Naive thymus-derived CD4-positive, alpha-beta T cell (primary cell): ENCODE measurements at regions of chr15 and their contacts with region 1.

Region 1: DNA sequence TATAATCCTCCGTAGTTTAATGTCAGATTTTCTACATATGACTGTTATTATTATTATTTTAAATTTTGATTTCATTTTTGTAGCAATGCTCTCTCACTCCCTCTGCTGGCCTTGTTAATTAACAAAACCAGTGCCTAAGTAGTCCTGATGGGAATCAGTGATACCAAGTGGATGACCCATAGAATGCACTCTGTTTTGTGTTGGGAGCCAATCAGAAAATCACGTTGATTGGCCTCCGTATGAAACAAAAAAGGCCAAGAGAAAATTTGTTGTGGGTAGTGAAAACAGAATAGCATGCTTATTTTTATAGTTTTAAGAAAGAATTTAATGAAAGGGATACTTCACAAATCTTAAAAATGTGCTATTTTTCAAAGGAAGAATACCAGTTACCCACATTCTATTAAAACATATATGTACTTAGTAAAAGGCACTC is 34.4 kb upstream of the MEIS2 start:
- DNase-seq: no peak
- ATAC-seq: no peak
- H3K4me3 ChIP-seq: no peak overlapping the region
- H3K4me3 Mint-ChIP-seq: no peak overlapping the region
- H3K27ac ChIP-seq: no peak overlapping the region
- H3K27ac Mint-ChIP-seq: no peak overlapping the region
- H3K4me1 ChIP-seq: no peaks in the 10 kb centered on the region
- H3K4me1 Mint-ChIP-seq: peaks cover 0 to 2% (median 0%) of the 10 kb centered on the region in 7 donors
- H3K27me3 ChIP-seq: no peaks in the 10 kb centered on the region
- H3K27me3 Mint-ChIP-seq: peaks cover 5 to 38% (median 26%) of the 10 kb centered on the region in 5 donors

Region 2: GRCh38 chr15:35751413-35752133 is 1383.1 kb before region 1 on chr15:
- CTCF ChIA-PET with region 1: no interaction called
- POLR2A ChIA-PET with region 1: no interaction called
- intact Hi-C with region 1: loop called in 1 of 2 experiments (anchors 10 kb)
- DNase-seq: peak in 5 of 9 donors; percentile 2 to 35 (median 10)
- ATAC-seq: no peak
- H3K4me3 ChIP-seq: no peak overlapping the region
- H3K4me3 Mint-ChIP-seq: peak overlapping the region in 1 of 10 donors; percentile 29
- H3K27ac ChIP-seq: no peak overlapping the region
- H3K27ac Mint-ChIP-seq: no peak overlapping the region
- H3K4me1 ChIP-seq: no peaks in the 10 kb centered on the region
- H3K4me1 Mint-ChIP-seq: no peaks in the 10 kb centered on the region
- H3K27me3 ChIP-seq: no peaks in the 10 kb centered on the region
- H3K27me3 Mint-ChIP-seq: peaks cover 4 to 19% (median 12%) of the 10 kb centered on the region in 5 donors

Region 3: GRCh38 chr15:36908991-36909390 is 225.7 kb before region 1 on chr15:
- CTCF ChIA-PET with region 1: no interaction called
- POLR2A ChIA-PET with region 1: no interaction called
- intact Hi-C with region 1: no loop called
- DNase-seq: no peak
- ATAC-seq: no peak
- H3K4me3 ChIP-seq: no peak overlapping the region
- H3K4me3 Mint-ChIP-seq: no peak overlapping the region
- H3K27ac ChIP-seq: no peak overlapping the region
- H3K27ac Mint-ChIP-seq: no peak overlapping the region
- H3K4me1 ChIP-seq: no peaks in the 10 kb centered on the region
- H3K4me1 Mint-ChIP-seq: no peaks in the 10 kb centered on the region
- H3K27me3 ChIP-seq: no peaks in the 10 kb centered on the region
- H3K27me3 Mint-ChIP-seq: peaks cover 0 to 11% (median 5%) of the 10 kb centered on the region in 5 donors